ENCODE measurements at regions of chr6 and their contacts with region 1.

Region 1: DNA sequence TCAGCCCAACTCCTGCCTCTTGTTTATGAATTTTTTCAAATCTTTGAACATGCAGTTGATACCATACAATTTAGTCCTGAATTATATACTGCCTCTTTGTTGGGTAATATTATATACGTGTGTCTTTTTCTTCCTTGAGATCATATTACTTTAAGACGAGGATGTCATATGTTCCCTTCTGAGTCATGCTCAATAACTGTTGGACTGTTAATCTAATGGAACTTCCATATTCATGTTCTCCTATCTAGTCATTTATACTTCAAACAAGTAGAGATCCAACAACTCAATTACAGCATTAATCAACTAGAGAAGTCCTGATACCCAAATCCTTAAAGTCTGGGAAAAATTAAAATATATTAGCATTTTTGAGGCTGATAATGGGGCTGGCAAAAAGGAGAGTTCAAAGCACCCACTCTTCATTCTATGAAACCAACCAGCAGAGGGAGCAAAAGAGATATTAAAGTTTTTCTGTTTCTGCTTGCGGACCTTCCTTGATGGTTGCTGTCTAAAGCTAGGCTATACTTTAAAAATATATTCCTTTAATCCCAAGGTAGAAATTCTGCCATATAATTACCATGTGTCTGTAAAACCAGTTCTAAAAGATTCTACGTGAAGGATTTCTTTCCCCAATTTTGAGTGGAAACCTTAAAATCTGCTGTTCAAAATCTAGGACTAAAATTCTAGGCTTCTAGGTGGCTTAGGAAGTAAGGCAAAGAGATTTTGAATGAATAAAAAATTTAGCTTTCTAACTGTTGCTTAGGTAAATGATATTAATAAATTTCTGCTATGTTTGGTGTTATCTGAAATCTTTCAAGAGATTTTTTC is 498.9 kb downstream of the BCKDHB start:
- DNase-seq: no peak
- ATAC-seq: no peak

Region 2: GRCh38 chr6:80214436-80215022 is 390.8 kb before region 1 on chr6:
- intact Hi-C with region 1: loop called in 1 of 2 experiments (anchors 10 kb)
- DNase-seq: peak in 1 of 2 donors; percentile 25
- ATAC-seq: peak; percentile 83

Measured in left colon (tissue), 2 donors.